ENCODE measurements at regions of chr12 and their contacts with region 1.

Region 1: DNA sequence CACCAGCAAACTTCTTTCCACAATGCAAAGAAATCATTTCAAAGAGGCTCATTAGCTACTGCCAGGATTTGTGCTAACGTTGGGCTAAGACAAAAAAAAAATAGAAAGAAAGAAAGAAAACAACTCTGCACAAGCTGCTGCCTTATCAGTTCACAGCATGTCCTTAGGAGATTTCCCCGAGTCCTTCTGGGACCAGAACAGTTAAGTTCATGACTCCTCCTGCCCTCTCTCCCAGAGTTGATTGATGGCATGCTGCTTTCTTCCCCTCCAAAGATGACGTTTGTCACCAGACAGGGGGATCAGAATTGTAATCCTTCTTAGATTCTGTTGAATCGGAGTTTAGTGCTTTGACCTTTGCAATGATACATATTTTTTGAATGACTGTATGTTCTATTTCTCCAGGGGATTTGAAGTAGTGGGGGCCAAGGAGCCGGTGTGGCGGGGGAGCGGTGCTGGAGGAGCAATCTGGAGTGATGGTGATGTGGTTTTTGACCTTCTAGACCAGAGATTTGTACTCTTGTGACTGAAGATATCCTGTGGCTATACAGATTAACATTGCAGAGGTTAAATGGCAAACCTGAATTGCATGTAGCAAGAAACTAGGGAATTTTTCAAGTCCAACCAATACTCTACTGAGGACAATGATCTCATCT is 409.2 kb upstream of the TMPO start:
- DNase-seq: no peak
- H3K4me3 ChIP-seq: no peak overlapping the region
- H3K27ac ChIP-seq: no peak overlapping the region
- H3K4me1 ChIP-seq: no peaks in the 10 kb centered on the region
- H3K27me3 ChIP-seq: no peaks in the 10 kb centered on the region
- CTCF ChIP-seq: no peak
- POLR2A ChIP-seq: no peak

Region 2: DNA sequence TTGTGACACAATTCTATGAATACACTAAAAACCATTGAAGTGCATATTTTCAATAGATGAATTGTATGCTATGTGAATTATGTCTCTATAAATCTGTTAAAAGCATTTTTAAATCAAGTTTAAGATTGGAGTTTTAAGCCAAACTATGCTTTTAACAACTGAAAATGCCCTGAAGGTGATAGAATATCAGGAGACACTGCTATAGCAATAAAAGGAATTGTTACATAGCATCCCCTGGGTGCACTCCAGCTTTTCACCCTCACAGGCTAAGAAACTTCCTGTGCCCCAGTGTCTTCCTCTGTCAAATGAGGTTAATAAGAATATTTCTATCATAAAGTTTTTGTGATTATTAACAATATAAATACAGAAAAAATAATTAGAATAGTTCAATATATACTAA is 63.5 kb before region 1 on chr12:
- intact Hi-C with region 1: loop called (anchors 2 kb)
- DNase-seq: no peak
- H3K4me3 ChIP-seq: no peak overlapping the region
- H3K27ac ChIP-seq: no peak overlapping the region
- H3K4me1 ChIP-seq: no peaks in the 10 kb centered on the region
- H3K27me3 ChIP-seq: no peaks in the 10 kb centered on the region
- CTCF ChIP-seq: no peak
- POLR2A ChIP-seq: no peak

Measured in breast epithelium (tissue), 4 donors.